ENCODE measurements at regions of chr18 and their contacts with region 1.

Region 1: DNA sequence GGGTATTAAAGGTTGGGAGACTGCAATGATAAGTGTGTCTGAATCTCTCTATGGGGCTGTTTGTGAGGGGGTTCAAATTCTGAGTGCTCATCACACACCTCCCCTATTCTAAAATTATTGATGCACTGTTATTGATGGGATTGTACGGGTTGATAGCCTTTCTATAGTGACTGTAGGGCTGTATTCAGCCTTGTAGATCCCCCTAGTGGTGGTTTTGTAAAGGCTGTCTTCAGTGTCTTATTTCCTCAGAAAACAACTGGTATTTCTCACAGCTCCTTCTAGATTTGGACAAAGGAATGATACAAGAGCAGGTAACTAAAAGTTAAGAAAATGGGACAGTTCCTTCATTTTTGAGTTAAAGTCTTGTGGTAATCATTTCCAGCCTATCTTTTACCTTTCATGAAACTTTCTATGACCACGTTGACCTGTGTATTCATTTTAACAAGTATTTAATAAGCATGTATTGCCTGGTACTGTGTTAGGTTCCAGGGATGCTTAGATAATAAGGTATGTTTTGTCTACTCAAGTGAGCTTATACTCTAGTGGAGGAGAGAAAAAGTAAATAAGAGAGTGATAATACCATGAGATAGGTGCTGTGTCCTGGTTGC is 21.2 kb downstream of the SMAD4 start:
- H3K4me3 ChIP-seq: no peak overlapping the region
- H3K27ac ChIP-seq: no peak overlapping the region
- H3K4me1 ChIP-seq: no peaks in the 10 kb centered on the region
- CTCF ChIP-seq: peak; percentile 39; the same call in 1 of the 2 replicates

Region 2: DNA sequence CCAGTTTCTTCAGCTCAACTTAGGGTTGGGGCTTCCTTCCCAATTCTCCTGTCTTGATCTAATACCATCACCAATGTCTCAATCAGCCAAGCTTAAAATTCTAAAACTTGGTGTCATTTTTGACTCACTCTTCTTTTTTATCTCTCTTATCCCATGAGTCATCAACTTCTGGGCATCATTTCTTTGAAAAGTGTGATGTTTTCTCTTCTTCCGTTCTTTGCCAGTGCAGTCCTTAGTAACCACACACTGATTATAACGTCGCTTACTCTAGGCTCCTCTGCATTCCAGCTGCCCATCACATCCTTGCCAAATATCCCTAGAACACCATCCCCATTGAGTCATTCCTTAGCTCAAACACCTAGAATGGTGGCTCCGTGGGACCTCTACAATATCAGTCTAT is 204.0 kb before region 1 on chr18:
- CTCF ChIA-PET with region 1: no interaction called
- POLR2A ChIA-PET with region 1: no interaction called
- H3K4me3 ChIP-seq: no peak overlapping the region
- H3K27ac ChIP-seq: no peak overlapping the region
- H3K4me1 ChIP-seq: peaks cover 2% of the 10 kb centered on the region; the same call in 1 of the 2 replicates
- CTCF ChIP-seq: no peak

Region 3: DNA sequence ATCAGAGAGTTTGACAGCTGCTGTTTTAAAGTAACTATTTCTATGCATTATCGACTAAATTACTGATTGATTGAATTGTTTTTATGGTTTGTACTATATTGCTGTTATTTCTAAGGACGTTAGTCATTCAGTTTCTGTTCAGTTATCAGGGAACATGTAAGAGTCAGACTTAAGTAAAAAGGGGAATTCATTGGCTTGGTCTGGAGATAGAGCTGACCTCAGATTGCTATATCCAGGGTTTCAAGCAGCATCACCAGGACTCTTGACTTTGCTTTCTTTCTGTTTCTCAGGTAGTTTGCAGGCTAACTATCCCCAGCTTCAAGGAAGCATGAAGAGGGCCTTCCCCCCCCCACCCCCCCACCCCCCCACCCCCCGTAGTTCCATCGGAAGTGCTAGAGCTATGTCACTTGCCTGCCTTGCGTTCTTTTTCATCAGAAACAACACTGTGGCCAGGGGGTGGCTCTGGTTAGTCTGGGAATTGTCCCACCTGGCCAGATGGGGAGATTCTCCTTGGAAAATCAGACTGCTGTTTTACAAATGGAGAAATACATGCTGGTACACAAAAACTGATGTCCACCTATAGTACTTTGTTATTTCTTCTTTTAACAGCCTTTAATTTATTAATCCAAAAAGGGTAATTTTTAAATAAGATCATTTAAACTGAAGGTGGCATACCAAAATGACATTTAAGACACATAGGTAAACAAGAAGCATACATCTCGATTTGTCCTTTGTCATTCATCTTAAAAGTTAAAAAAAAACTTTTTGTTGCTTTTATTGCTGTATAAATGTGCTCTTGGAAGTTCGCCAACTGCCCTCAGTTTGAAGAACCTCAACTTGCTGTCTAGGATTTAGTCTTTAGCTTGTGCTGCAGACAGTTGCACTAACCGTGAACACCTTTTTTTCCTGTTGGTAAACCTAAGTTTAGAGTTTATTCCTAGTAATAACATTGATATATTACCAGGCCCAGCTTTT is 11.8 kb before region 1 on chr18:
- CTCF ChIA-PET with region 1: interaction called, 28 read pairs
- POLR2A ChIA-PET with region 1: no interaction called
- H3K4me3 ChIP-seq: no peak overlapping the region
- H3K27ac ChIP-seq: no peak overlapping the region
- H3K4me1 ChIP-seq: peaks cover 67% of the 10 kb centered on the region
- CTCF ChIP-seq: no peak

Region 4: DNA sequence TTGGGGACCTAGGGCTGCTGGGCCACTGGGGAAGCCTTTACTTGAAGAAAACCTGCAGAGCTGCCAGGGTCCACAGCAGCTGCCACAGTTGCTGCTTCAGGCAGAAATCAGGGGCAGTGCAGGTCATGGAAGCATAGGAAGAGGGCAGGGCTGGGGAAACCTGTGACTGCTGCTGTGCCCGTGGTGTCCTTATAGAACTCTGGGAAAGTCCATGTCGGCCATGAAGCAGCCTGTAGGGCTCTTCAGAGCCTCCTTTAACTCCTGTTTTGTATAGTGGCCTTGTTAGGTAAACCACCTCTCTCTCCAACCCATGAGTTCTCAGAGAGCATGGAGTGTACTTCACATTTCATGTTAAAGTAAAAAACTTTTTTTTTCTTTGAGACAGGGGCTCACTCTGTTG is 40.9 kb after region 1 on chr18:
- CTCF ChIA-PET with region 1: no interaction called
- POLR2A ChIA-PET with region 1: no interaction called
- H3K4me3 ChIP-seq: no peak overlapping the region
- H3K27ac ChIP-seq: no peak overlapping the region
- H3K4me1 ChIP-seq: no peaks in the 10 kb centered on the region
- CTCF ChIP-seq: no peak

Region 5: DNA sequence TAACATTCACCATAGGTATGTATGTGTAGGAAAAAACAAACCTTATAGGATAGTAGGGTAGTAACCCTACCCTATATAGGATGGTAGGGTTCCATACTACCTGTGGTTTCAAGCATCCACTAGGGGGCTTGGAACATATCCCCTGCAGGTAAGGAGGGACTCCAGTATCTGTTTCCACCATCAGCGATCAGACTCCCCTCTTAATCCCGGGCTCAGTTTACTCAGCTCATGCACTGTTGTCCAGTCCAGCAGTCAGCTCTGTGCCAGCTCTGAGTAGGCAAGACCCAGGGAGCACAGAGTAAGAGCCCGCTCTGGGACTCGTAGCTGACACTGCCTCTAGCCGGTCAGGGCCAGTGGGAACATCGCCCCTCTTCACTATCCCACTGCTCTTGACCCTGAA is 84.6 kb after region 1 on chr18:
- CTCF ChIA-PET with region 1: no interaction called
- POLR2A ChIA-PET with region 1: no interaction called
- H3K4me3 ChIP-seq: no peak overlapping the region
- H3K27ac ChIP-seq: no peak overlapping the region
- H3K4me1 ChIP-seq: 0 out of 2 replicates have a peak, but pooled peaks cover 3% of the 10 kb centered on the region
- CTCF ChIP-seq: peak; percentile 40; the same call in 1 of the 2 replicates

Measured in HEK293 (cell line).